ENCODE measurements at regions of chr10 and their contacts with region 1.

Region 1: DNA sequence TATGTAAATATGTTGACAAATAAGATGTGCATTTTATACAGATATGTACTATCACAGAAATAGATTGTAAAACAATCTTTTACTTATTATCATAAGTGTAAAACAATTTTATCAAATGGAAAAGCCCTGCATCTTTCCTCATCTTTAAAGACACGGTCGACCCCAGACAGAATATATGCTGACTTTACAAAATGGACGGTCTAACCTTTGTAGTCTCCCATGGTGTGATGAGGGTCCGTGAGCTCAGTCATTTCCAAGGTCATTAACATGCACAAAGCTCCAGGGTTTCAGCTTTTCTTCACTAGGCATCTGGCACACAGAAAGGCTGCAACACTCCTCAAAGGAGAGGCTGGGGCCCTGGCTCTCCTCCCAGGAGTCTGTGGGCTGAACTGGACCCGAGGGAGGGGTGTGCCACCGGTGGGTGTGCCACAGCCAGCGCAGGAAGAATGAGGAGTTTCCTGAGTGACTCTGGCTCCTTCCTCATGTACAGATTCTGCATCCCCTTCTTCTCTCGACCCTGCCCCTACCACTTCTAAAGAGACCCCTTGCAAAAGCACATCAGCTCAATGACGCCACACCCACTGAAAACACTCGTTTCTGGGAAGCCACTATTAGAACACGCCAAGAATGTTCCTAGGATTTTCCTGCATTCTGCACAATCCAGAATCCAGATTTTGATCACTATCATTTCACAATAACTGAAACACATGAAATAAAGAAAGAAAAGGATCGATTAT is 26.2 kb upstream of the ABLIM1 start:
- DNase-seq: peak in 6 of 10 donors; percentile 34 to 63 (median 48)
- H3K4me3 ChIP-seq: peak overlapping the region in 30 of 59 donors; percentile 1 to 49 (median 22)
- H3K27ac ChIP-seq: peak overlapping the region in 51 of 59 donors; percentile 3 to 85 (median 64)
- H3K27me3 ChIP-seq: peaks cover 0 to 29% (median 0%) of the 10 kb centered on the region in 45 donors
- CTCF ChIP-seq: no peak

Region 2: DNA sequence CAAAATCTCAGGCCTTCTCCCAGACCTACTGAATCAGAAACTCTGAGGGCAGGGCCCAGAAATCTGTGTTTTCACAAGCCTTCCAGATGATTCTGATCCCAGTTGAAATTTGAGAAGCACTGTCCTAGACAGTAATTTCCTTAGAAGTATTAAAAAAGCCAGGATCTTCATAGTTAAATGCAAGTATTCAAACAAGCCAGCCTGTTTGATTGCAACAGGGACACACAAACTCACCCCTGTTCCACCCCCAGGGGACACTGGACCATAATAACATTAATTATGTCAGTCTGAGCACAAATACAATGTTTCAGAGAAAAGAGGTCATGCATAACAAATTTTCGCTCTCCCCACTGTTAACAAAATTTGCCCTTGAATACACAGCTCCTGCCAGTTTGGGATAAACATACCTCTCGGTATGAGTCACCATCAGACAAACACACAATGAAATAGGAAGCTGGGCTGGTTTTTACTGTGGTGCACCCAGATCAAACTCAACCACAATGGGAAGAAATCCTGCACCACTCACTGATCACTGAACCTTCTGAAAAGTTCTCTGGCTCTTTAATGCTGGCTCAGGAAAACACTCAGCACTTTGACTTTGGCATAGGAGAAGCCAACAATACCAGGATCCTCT is 60.5 kb before region 1 on chr10:
- intact Hi-C with region 1: loop called in 1 of 2 experiments (anchors 10 kb)
- DNase-seq: no peak
- H3K4me3 ChIP-seq: no peak overlapping the region
- H3K27ac ChIP-seq: peak overlapping the region in 14 of 59 donors; percentile 1 to 59 (median 42)
- H3K27me3 ChIP-seq: no peaks in the 10 kb centered on the region
- CTCF ChIP-seq: no peak

Measured in dorsolateral prefrontal cortex (tissue), 120 donors.